Activated CD4-positive, alpha-beta memory T cell treated with anti-CD3 and anti-CD28 coated beads for 36 hours (primary cell): ENCODE measurements at regions of chr17 and their contacts with region 1.

Region 1: DNA sequence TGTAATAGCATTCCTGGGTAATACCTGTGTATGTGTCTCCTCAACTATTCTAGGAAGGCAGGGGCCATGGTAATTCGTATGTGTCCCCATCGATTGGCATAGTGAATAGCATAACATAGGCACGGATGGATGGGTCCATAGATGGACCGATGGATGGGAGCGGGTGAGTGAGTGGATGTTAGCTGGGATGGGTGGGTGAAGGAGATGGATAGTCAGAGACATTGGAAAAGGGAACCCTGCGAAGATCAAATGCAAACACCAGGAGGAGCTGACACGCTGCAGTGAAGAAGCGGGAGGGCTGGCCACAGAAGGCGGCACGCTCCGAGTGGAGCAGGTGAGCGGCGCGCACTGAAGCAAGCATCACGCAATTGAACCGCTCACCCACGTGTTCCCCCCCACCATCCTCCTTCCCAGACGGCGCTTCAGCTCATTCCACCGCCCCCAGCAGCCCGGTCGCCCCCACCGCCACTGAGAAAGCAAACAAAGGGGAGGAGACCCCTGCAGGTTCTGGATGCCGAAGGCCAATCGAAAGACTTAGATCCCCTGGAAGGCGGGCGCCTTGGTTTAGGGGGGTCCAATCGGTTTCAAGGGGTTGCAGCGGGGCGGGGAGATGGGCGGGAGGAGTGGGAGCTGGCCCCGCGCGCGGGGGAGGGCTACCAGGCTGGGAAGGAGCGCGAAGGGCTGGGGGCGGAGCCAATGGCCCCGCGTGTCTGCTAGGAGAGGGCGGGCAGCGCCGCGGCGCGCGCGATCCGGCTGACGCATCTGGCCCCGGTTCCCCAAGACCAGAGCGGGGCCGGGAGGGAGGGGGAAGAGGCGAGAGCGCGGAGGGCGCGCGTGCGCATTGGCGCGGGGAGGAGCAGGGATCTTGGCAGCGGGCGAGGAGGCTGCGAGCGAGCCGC is at the start of gene ARRB2:
- DNase-seq: peak; percentile 99
- H3K4me3 Mint-ChIP-seq: peak within 1 kb of the TSS; percentile 98
- H3K27ac Mint-ChIP-seq: peak within 1 kb of the TSS; percentile 94
- H3K4me1 Mint-ChIP-seq: peaks cover 55% of the 10 kb centered on the region
- H3K27me3 Mint-ChIP-seq: no peaks in the 10 kb centered on the region
- total RNA-seq, gene ARRB2: 210 to 226 TPM

Region 2: GRCh38 chr17:4733073-4733531 is 23.1 kb after region 1 on chr17:
- CTCF ChIA-PET with region 1: interaction called, 3 read pairs
- POLR2A ChIA-PET with region 1: interaction called, 5 read pairs
- intact Hi-C with region 1: loop called (anchors 1 kb)
- DNase-seq: no peak
- H3K4me3 Mint-ChIP-seq: peak overlapping the region; percentile 20
- H3K27ac Mint-ChIP-seq: no peak overlapping the region
- H3K4me1 Mint-ChIP-seq: peaks cover 29% of the 10 kb centered on the region
- H3K27me3 Mint-ChIP-seq: peaks cover under 1% of the 10 kb centered on the region

Region 3: GRCh38 chr17:4796553-4796921 is 86.5 kb after region 1 on chr17:
- CTCF ChIA-PET with region 1: interaction called, 4 read pairs
- POLR2A ChIA-PET with region 1: interaction called, 3 read pairs
- intact Hi-C with region 1: loop called (anchors 1 kb)
- DNase-seq: peak; percentile 44
- H3K4me3 Mint-ChIP-seq: peak overlapping the region; percentile 99
- H3K27ac Mint-ChIP-seq: peak overlapping the region; percentile 92
- H3K4me1 Mint-ChIP-seq: peaks cover 18% of the 10 kb centered on the region
- H3K27me3 Mint-ChIP-seq: no peaks in the 10 kb centered on the region

Region 4: GRCh38 chr17:4833178-4833940 is 123.3 kb after region 1 on chr17 and contains the start of gene MINK1:
- CTCF ChIA-PET with region 1: interaction called, 3 read pairs
- POLR2A ChIA-PET with region 1: no interaction called
- intact Hi-C with region 1: loop called (anchors 1 kb)
- DNase-seq: peak; percentile 92
- H3K4me3 Mint-ChIP-seq: peak within 1 kb of the TSS; percentile 88
- H3K27ac Mint-ChIP-seq: peak within 1 kb of the TSS; percentile 88
- H3K4me1 Mint-ChIP-seq: peaks cover 28% of the 10 kb centered on the region
- H3K27me3 Mint-ChIP-seq: no peaks in the 10 kb centered on the region
- total RNA-seq, gene MINK1: 67.5 to 79.3 TPM

Region 5: GRCh38 chr17:4881761-4882555 is 171.9 kb after region 1 on chr17:
- CTCF ChIA-PET with region 1: interaction called, 8 read pairs
- POLR2A ChIA-PET with region 1: no interaction called
- intact Hi-C with region 1: loop called (anchors 1 kb)
- DNase-seq: peak; percentile 74
- H3K4me3 Mint-ChIP-seq: no peak overlapping the region
- H3K27ac Mint-ChIP-seq: no peak overlapping the region
- H3K4me1 Mint-ChIP-seq: no peaks in the 10 kb centered on the region
- H3K27me3 Mint-ChIP-seq: no peaks in the 10 kb centered on the region

Region 6: GRCh38 chr17:4891411-4892342 is 181.6 kb after region 1 on chr17:
- CTCF ChIA-PET with region 1: no interaction called
- POLR2A ChIA-PET with region 1: no interaction called
- intact Hi-C with region 1: loop called (anchors 1 kb)
- DNase-seq: no peak
- H3K4me3 Mint-ChIP-seq: no peak overlapping the region
- H3K27ac Mint-ChIP-seq: no peak overlapping the region
- H3K4me1 Mint-ChIP-seq: no peaks in the 10 kb centered on the region
- H3K27me3 Mint-ChIP-seq: no peaks in the 10 kb centered on the region